HCT116 (cell line): ENCODE measurements at regions of chr6 and their contacts with region 1.

Region 1: GRCh38 chr6:109610590-109610989 is 80.4 kb downstream of the AK9 start:
- DNase-seq: no peak
- ATAC-seq: no peak
- H3K4me3 ChIP-seq: no peak overlapping the region
- H3K27ac ChIP-seq: no peak overlapping the region
- H3K4me1 ChIP-seq: no peaks in the 10 kb centered on the region
- H3K27me3 ChIP-seq: no peaks in the 10 kb centered on the region
- CTCF ChIP-seq: no peak
- POLR2A ChIP-seq: no peak
- RAD21 ChIP-seq: no peak

Region 2: DNA sequence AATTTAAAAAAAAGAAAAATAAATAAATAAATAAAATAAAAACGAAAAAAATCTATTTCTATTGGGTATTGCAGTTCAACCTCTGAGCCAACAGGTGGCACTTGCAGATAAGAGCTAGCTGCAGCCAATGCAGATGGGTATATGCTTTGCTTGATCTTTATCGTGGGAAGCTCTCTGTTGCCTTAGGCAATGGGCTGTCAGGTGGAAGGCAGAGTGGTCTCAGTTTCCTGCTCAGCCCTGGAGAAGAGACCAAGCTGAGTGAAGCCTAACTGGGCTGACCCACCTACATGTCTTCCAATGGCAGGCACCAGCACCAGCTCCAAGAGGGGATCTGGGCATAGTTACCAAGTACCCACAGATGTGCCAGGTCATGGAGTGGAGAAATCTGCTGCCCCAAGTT is 14.6 kb before region 1 on chr6:
- CTCF ChIA-PET with region 1: interaction called, 11 read pairs
- POLR2A ChIA-PET with region 1: no interaction called
- RAD21 ChIA-PET with region 1: no interaction called
- intact Hi-C with region 1: no loop called
- DNase-seq: peak; percentile 18
- ATAC-seq: peak; percentile 72
- H3K4me3 ChIP-seq: no peak overlapping the region
- H3K27ac ChIP-seq: no peak overlapping the region
- H3K4me1 ChIP-seq: no peaks in the 10 kb centered on the region
- H3K27me3 ChIP-seq: no peaks in the 10 kb centered on the region
- CTCF ChIP-seq: peak; percentile 37 to 60 (median 51); a peak in 4 of 6 replicates
- POLR2A ChIP-seq: no peak
- RAD21 ChIP-seq: peak; percentile 64

Region 3: DNA sequence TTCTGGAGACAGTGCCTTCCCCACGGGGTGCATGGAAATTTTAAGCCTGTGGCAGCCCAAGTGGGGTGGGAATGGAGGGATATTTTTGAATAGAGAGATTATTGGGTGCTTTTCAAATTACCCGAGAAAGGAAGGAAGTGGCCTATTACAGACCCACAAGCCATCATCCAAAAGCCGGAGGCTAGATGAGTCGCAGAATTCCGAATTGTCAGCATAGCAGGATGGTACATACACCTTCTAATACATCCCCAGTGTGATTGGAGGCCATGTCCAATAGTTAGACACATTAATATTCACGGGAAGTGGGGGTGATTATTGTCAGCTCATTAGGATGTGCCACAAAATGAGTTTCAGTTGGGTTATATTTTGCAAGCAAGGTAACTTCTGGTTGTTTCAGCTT is 213.5 kb after region 1 on chr6:
- CTCF ChIA-PET with region 1: no interaction called
- POLR2A ChIA-PET with region 1: no interaction called
- RAD21 ChIA-PET with region 1: no interaction called
- intact Hi-C with region 1: no loop called
- DNase-seq: no peak
- ATAC-seq: no peak
- H3K4me3 ChIP-seq: no peak overlapping the region
- H3K27ac ChIP-seq: no peak overlapping the region
- H3K4me1 ChIP-seq: 0 out of 4 replicates have a peak, but pooled peaks cover 0 to 5% of the 10 kb centered on the region in 2 experiments
- H3K27me3 ChIP-seq: no peaks in the 10 kb centered on the region
- CTCF ChIP-seq: no peak
- POLR2A ChIP-seq: no peak
- RAD21 ChIP-seq: no peak